K562 (cell line): ENCODE measurements at regions of chr1 and their contacts with region 1.

Region 1: DNA sequence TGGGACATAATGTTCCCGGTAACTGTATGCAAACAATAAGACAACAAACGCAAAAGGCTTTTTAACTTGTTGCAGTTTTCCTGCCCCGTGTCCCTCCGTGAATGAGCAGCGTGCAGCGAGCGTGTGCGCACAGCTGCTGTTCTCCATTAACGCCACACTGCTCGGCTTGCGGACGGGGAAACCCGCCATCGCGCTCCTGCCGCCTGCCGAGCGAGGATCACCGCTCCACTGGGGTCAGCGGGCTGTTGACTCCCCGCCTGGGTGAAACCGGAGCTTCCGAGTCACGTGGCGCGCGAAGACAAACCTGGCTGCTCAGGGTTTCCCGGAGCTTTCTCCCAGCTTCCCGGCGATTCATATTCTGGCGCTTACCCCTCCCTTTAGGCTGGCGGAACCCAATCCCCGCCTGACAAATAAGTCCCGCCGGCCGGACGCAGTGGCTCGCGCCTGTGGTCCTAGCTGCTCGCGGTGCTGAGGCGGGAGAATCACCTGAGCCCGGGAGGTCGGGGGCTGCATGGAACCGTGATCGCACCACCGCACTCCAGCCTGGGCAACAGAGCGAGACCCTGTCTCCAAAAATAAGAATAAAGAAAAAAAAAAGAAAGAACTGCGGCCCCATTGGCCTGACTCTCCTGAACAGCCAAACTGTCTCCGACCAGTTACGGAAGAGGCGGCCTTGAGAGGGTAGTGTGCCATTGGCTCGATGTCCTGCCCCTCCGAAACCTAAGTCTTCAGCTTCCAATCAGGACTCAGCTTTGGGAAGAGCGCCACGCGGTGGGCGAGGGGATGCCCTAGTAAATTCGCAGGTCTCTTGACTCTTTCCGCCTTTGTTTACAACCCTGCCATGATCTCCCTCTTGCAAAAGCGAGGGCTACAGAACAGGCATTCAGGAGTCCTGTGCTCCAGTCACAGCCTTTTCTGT is at the start of gene CREB3L4:
- DNase-seq: peak; percentile 85 to 98 (median 90)
- ATAC-seq: peak; percentile 87
- H3K4me3 ChIP-seq: peak within 1 kb of the TSS; percentile 51
- H3K27ac ChIP-seq: peak within 1 kb of the TSS; percentile 82
- H3K4me1 ChIP-seq: peaks cover 7 to 19% of the 10 kb centered on the region in 2 experiments; a peak in 4 of 5 replicates
- H3K27me3 ChIP-seq: no peaks in the 10 kb centered on the region
- CTCF ChIP-seq: peak; percentile 47 to 78 (median 68)
- EP300 ChIP-seq: peak; percentile 3; the same call in 1 of the 2 replicates
- POLR2A ChIP-seq: peak; percentile 91
- RAD21 ChIP-seq: peak in 1 of 2 experiments; percentile 42; a peak in 2 of 4 replicates
- polyA plus RNA-seq, gene CREB3L4: 13.3 to 17.2 TPM

Region 2: GRCh38 chr1:153796791-153797659 is 170.3 kb before region 1 on chr1:
- CTCF ChIA-PET with region 1: no interaction called
- POLR2A ChIA-PET with region 1: interaction called, 6 read pairs
- in situ Hi-C with region 1: no loop called
- intact Hi-C with region 1: loop called (anchors 5 kb)
- DNase-seq: peak; percentile 83 to 87 (median 86)
- ATAC-seq: peak; percentile 89
- H3K4me3 ChIP-seq: no peak overlapping the region
- H3K27ac ChIP-seq: no peak overlapping the region
- H3K4me1 ChIP-seq: peaks cover 0 to 42% of the 10 kb centered on the region in 2 experiments; a peak in 2 of 5 replicates
- H3K27me3 ChIP-seq: no peaks in the 10 kb centered on the region
- CTCF ChIP-seq: peak; percentile 88 to 91 (median 89)
- EP300 ChIP-seq: no peak
- POLR2A ChIP-seq: no peak
- RAD21 ChIP-seq: peak; percentile 66 to 86

Region 3: GRCh38 chr1:153946622-153947241 is 20.6 kb before region 1 on chr1 and contains the start of gene DENND4B:
- CTCF ChIA-PET with region 1: interaction called, 3 read pairs
- POLR2A ChIA-PET with region 1: interaction called, 16 read pairs
- in situ Hi-C with region 1: no loop called
- intact Hi-C with region 1: no loop called
- DNase-seq: peak; percentile 92 to 96 (median 95)
- ATAC-seq: peak; percentile 94
- H3K4me3 ChIP-seq: peak within 1 kb of the TSS; percentile 99
- H3K27ac ChIP-seq: peak within 1 kb of the TSS; percentile 85
- H3K4me1 ChIP-seq: peaks cover 12 to 32% of the 10 kb centered on the region in 2 experiments; a peak in 4 of 5 replicates
- H3K27me3 ChIP-seq: no peaks in the 10 kb centered on the region
- CTCF ChIP-seq: peak; percentile 82 to 94 (median 89)
- EP300 ChIP-seq: 0 out of 2 replicates have a peak, but pooled peaks have one; percentile 13
- POLR2A ChIP-seq: peak; percentile 41; the same call in 1 of the 2 replicates
- RAD21 ChIP-seq: peak; percentile 44 to 57; a peak in 3 of 4 replicates
- polyA plus RNA-seq, gene DENND4B: 9.5 to 13.4 TPM

Region 4: GRCh38 chr1:153977250-153978240 is 10.2 kb after region 1 on chr1 and contains the start of gene JTB:
- CTCF ChIA-PET with region 1: no interaction called
- POLR2A ChIA-PET with region 1: interaction called, 84 read pairs
- in situ Hi-C with region 1: no loop called
- intact Hi-C with region 1: no loop called
- DNase-seq: peak; percentile 83 to 93 (median 84)
- ATAC-seq: peak; percentile 90
- H3K4me3 ChIP-seq: peak within 1 kb of the TSS; percentile 84
- H3K27ac ChIP-seq: peak within 1 kb of the TSS; percentile 91
- H3K4me1 ChIP-seq: peaks cover 13 to 17% of the 10 kb centered on the region in 2 experiments; a peak in 4 of 5 replicates
- H3K27me3 ChIP-seq: no peaks in the 10 kb centered on the region
- CTCF ChIP-seq: 0 out of 6 replicates have a peak, but pooled peaks of 1 of the 3 experiments have one; percentile 4
- EP300 ChIP-seq: peak; percentile 22; the same call in 1 of the 2 replicates
- POLR2A ChIP-seq: peak; percentile 83
- RAD21 ChIP-seq: 0 out of 4 replicates have a peak, but pooled peaks of 1 of the 2 experiments have one; percentile 2
- polyA plus RNA-seq, gene JTB: 24.7 to 36.7 TPM

Region 5: DNA sequence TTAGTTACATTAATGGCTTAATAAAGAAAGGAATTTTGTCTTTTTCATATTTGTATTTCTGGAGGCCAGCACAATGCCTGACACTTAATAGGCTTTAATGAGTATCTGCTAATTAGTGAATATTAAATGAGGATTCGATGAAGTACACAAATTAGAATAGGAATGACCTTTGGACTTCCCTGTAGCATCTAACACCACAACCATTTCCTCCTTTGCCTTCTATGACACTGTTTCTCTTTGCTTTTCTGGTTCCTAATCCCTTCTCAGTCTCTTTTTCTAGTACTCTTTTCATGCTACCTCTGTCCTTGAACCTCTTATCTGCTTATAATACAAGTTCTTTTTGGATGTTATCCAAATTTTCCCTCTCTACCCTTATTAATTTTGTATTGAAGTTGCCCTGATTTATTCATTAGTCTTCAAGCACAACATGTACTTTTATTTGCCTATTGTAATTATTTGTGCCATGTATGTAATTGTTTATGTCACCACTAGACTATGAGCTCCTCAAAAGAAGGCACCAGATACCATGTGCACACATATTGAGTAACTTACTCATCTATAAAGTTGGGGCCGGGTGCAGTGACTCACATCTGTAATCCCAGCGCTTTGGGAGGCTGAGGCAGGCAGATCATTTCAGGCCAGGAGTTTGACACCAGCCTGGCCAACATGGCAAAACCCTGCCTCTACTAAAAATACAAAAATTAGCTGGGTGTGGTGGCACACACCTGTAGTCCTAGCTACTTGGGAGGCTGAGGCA is 47.0 kb after region 1 on chr1:
- CTCF ChIA-PET with region 1: no interaction called
- POLR2A ChIA-PET with region 1: no interaction called
- in situ Hi-C with region 1: no loop called
- intact Hi-C with region 1: no loop called
- DNase-seq: no peak
- ATAC-seq: no peak
- H3K4me3 ChIP-seq: no peak overlapping the region
- H3K27ac ChIP-seq: no peak overlapping the region
- H3K4me1 ChIP-seq: no peaks in the 10 kb centered on the region; a peak in 2 of 5 replicates
- H3K27me3 ChIP-seq: peaks cover 4 to 16% of the 10 kb centered on the region in 2 experiments; a peak in 3 of 5 replicates
- CTCF ChIP-seq: no peak
- EP300 ChIP-seq: no peak
- POLR2A ChIP-seq: no peak
- RAD21 ChIP-seq: no peak

Region 6: DNA sequence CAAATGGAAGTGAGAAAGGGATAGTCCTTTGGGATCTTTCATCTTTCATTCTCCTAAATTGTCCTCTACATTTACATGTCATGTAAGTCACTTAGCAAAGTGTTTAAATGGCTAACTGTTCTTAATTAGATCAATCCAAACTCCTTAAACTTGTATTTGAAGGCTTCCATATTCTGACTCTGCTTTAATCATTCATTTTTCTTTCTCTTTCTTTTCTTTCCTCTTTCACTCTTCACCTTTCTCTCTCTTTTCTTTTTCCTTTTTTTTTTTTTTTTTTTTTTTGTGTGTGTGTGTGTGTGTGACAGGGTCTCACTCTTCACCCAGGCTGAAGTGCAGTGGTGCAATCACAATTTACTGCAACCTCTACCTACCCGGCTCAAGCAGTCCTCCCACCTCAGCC is 95.0 kb after region 1 on chr1:
- CTCF ChIA-PET with region 1: no interaction called
- POLR2A ChIA-PET with region 1: no interaction called
- in situ Hi-C with region 1: no loop called
- intact Hi-C with region 1: no loop called
- DNase-seq: no peak
- ATAC-seq: no peak
- H3K4me3 ChIP-seq: no peak overlapping the region
- H3K27ac ChIP-seq: no peak overlapping the region
- H3K4me1 ChIP-seq: no peaks in the 10 kb centered on the region
- H3K27me3 ChIP-seq: peaks cover 0 to 3% of the 10 kb centered on the region in 2 experiments; a peak in 3 of 5 replicates
- CTCF ChIP-seq: no peak
- EP300 ChIP-seq: no peak
- POLR2A ChIP-seq: no peak
- RAD21 ChIP-seq: no peak